ENCODE measurements at regions of chr3 and their contacts with region 1.

Region 1: DNA sequence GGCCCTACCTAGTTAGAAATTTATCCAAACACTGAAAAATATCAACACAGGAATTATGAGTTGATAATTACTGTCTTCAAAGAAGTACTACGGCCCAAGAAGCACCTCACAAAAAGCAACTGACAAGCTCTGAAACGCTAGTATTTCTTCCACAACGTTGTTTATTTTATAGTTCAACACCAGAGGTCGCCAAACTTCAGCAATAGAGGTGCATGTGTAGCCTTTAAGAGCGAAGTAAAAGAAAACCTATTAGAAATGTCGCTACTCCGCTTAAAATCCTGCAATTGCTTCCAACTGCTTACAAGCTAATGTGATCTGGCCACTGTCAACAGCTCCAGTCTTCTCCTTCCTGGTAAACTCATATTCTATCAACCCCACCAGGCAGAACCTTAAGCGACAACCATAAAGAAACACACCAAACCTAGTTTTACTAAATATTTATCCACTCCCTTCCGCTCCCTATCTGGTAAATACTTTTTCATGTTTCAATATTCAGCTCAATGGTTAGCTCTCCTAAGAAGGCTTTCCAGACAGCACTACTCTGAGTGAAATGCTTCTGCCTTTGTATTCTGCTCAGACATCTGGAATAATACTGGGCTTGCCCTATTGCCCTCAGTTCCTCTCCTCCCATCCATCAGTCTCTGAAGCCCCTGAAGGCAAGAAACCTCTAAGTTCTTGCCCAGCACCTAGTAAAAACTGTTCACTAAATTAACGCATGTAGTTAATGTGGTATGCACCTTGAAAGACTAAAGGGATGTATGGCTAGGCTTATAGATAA is 110.2 kb downstream of the NR1I2 start:
- DNase-seq: peak; percentile 80
- H3K4me3 ChIP-seq: no peak overlapping the region
- H3K27ac ChIP-seq: no peak overlapping the region
- H3K4me1 ChIP-seq: peaks cover 4% of the 10 kb centered on the region
- H3K27me3 ChIP-seq: no peaks in the 10 kb centered on the region
- CTCF ChIP-seq: peak; percentile 45 to 66
- POLR2A ChIP-seq: no peak

Region 2: DNA sequence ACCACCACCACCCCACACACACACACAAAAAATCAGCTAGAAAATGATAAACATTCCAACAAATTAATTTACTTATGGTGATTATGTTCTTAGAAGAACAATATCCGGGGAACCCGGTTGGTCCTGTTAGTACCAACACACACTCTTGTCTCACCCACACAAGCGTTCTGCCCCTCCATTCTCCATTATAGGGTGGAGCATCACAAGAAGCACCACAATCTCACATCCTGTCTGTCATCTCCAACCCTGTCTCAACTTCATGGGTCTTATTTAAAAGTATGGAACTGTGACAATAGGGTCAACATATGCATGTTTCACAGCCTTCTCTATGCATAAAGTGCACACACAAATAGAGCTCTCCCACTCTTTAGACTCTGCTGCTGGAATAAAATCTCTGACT is 196.5 kb after region 1 on chr3:
- CTCF ChIA-PET with region 1: interaction called, 28 read pairs
- POLR2A ChIA-PET with region 1: interaction called, 3 read pairs
- dilution Hi-C with region 1: no loop called
- intact Hi-C with region 1: no loop called
- DNase-seq: no peak
- H3K4me3 ChIP-seq: no peak overlapping the region
- H3K27ac ChIP-seq: no peak overlapping the region
- H3K4me1 ChIP-seq: peaks cover 26% of the 10 kb centered on the region
- H3K27me3 ChIP-seq: no peaks in the 10 kb centered on the region
- CTCF ChIP-seq: no peak
- POLR2A ChIP-seq: no peak

Region 3: DNA sequence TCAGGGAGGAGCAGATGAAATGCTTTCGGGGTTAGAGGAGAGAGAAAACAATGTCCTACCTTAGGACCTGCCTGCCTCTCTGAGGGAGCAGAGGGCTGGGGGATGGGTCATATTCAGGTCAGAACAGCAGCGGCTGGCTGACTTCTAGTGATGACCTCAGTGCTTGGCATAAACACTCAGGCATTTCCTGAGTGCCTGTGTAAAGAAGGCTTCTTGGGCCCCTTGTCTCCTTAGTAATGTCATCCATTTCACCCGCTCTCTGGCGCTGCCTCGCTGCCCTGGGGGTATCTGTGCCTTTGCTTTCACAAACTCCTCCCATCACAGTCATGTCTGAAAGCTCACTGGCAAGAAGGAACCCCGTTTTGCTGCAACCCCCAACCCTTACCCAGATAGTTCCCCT is 285.0 kb after region 1 on chr3:
- CTCF ChIA-PET with region 1: interaction called, 23 read pairs
- POLR2A ChIA-PET with region 1: no interaction called
- dilution Hi-C with region 1: no loop called
- intact Hi-C with region 1: no loop called
- DNase-seq: peak; percentile 68
- H3K4me3 ChIP-seq: no peak overlapping the region
- H3K27ac ChIP-seq: peak overlapping the region; percentile 72
- H3K4me1 ChIP-seq: peaks cover 23% of the 10 kb centered on the region
- H3K27me3 ChIP-seq: no peaks in the 10 kb centered on the region
- CTCF ChIP-seq: no peak
- POLR2A ChIP-seq: no peak

Region 4: DNA sequence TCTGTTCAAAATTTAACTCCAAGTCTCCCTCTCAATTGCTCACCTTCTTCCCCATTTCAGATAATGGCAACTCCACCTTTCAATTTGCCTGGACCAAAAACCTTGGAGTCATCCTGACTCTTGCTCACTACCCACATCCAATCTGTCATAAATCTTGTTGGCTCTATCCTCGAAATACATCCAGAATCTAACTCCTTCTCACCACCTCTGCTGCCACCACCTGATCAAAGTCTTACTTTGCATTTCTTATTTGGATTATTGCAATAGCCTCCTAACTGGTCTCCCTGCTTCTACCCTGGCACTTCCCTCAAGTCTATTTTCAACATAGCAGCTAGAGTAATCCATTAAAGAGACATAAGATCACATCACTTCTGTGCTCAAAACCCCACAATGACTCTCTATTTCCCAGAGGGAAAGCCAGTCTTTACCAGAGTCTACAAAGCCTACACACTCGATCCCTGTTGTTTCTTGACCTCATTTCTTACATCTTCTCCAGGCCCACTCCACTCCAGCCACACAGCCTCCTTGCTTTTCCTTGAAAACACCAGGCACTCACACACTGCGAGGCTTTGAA is 306.3 kb after region 1 on chr3:
- CTCF ChIA-PET with region 1: interaction called, 16 read pairs
- POLR2A ChIA-PET with region 1: no interaction called
- dilution Hi-C with region 1: no loop called
- intact Hi-C with region 1: loop called (anchors 1 kb)
- DNase-seq: peak; percentile 39
- H3K4me3 ChIP-seq: no peak overlapping the region
- H3K27ac ChIP-seq: no peak overlapping the region
- H3K4me1 ChIP-seq: peaks cover 8% of the 10 kb centered on the region
- H3K27me3 ChIP-seq: no peaks in the 10 kb centered on the region
- CTCF ChIP-seq: peak in 1 of 2 donors; percentile 17
- POLR2A ChIP-seq: no peak

Region 5: DNA sequence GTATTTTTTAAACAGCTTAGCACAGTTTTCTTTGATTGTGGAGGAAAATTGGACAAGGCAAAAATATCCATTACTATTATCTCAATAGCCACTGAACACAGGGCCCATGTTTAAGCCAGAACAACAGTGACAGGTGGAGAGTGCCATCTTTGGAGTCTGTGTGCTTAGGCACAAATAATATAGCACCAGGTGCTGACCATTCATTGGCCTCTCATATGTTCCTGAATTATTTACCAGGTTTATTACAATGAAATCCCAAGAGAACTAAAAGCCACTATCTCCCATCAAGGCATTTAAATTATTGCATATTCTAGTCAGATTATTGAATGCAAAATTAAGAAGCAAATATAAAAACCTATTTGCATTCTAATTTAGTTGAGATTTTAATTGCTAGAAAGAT is 353.3 kb after region 1 on chr3:
- CTCF ChIA-PET with region 1: interaction called, 14 read pairs
- POLR2A ChIA-PET with region 1: no interaction called
- dilution Hi-C with region 1: no loop called
- intact Hi-C with region 1: loop called (anchors 5 kb)
- DNase-seq: no peak
- H3K4me3 ChIP-seq: no peak overlapping the region
- H3K27ac ChIP-seq: no peak overlapping the region
- H3K4me1 ChIP-seq: no peaks in the 10 kb centered on the region
- H3K27me3 ChIP-seq: peaks cover 10 to 21% of the 10 kb centered on the region in 2 experiments
- CTCF ChIP-seq: no peak
- POLR2A ChIP-seq: no peak

Measured in endothelial cell of umbilical vein (primary cell).